CD4-positive, alpha-beta T cell (primary cell): ENCODE measurements at regions of chr17 and their contacts with region 1.

Region 1: GRCh38 chr17:67376737-67377487 is at the start of gene PITPNC1:
- DNase-seq: peak; percentile 77 to 95 (median 84)
- ATAC-seq: peak; percentile 71
- H3K4me3 ChIP-seq: peak within 1 kb of the TSS; percentile 99
- H3K4me3 Mint-ChIP-seq: peak within 1 kb of the TSS; percentile 97
- H3K27ac ChIP-seq: peak within 1 kb of the TSS; percentile 76 to 95
- H3K27ac Mint-ChIP-seq: peak within 1 kb of the TSS; percentile 86
- H3K4me1 ChIP-seq: peaks cover 49% of the 10 kb centered on the region
- H3K4me1 Mint-ChIP-seq: peaks cover 41% of the 10 kb centered on the region
- H3K27me3 ChIP-seq: no peaks in the 10 kb centered on the region
- H3K27me3 Mint-ChIP-seq: no peaks in the 10 kb centered on the region
- CTCF ChIP-seq: no peak
- total RNA-seq, gene PITPNC1: 80.2 to 83.4 TPM

Region 2: GRCh38 chr17:67359960-67360773 is 16.7 kb before region 1 on chr17:
- CTCF ChIA-PET with region 1: interaction called, 21 read pairs
- POLR2A ChIA-PET with region 1: interaction called, 40 read pairs
- intact Hi-C with region 1: loop called in 1 of 2 experiments (anchors 2 kb)
- DNase-seq: peak in 10 of 14 experiments; percentile 34 to 84 (median 58)
- ATAC-seq: peak; percentile 96
- H3K4me3 ChIP-seq: no peak overlapping the region
- H3K4me3 Mint-ChIP-seq: peak overlapping the region; percentile 17
- H3K27ac ChIP-seq: peak overlapping the region in 1 of 2 donors; percentile 37
- H3K27ac Mint-ChIP-seq: peak overlapping the region; percentile 73
- H3K4me1 ChIP-seq: peaks cover 48% of the 10 kb centered on the region
- H3K4me1 Mint-ChIP-seq: peaks cover 55% of the 10 kb centered on the region
- H3K27me3 ChIP-seq: no peaks in the 10 kb centered on the region
- H3K27me3 Mint-ChIP-seq: no peaks in the 10 kb centered on the region
- CTCF ChIP-seq: peak; percentile 56

Region 3: GRCh38 chr17:67400193-67400592 is 23.3 kb after region 1 on chr17:
- CTCF ChIA-PET with region 1: interaction called, 13 read pairs
- POLR2A ChIA-PET with region 1: interaction called, 6 read pairs
- intact Hi-C with region 1: loop called in 1 of 2 experiments (anchors 2 kb)
- DNase-seq: peak in 4 of 14 experiments; percentile 34 to 72 (median 60)
- ATAC-seq: peak; percentile 50
- H3K4me3 ChIP-seq: no peak overlapping the region
- H3K4me3 Mint-ChIP-seq: peak overlapping the region; percentile 65
- H3K27ac ChIP-seq: peak overlapping the region; percentile 31 to 77
- H3K27ac Mint-ChIP-seq: peak overlapping the region; percentile 99
- H3K4me1 ChIP-seq: peaks cover 52% of the 10 kb centered on the region
- H3K4me1 Mint-ChIP-seq: peaks cover 77% of the 10 kb centered on the region
- H3K27me3 ChIP-seq: no peaks in the 10 kb centered on the region
- H3K27me3 Mint-ChIP-seq: no peaks in the 10 kb centered on the region
- CTCF ChIP-seq: no peak

Region 4: DNA sequence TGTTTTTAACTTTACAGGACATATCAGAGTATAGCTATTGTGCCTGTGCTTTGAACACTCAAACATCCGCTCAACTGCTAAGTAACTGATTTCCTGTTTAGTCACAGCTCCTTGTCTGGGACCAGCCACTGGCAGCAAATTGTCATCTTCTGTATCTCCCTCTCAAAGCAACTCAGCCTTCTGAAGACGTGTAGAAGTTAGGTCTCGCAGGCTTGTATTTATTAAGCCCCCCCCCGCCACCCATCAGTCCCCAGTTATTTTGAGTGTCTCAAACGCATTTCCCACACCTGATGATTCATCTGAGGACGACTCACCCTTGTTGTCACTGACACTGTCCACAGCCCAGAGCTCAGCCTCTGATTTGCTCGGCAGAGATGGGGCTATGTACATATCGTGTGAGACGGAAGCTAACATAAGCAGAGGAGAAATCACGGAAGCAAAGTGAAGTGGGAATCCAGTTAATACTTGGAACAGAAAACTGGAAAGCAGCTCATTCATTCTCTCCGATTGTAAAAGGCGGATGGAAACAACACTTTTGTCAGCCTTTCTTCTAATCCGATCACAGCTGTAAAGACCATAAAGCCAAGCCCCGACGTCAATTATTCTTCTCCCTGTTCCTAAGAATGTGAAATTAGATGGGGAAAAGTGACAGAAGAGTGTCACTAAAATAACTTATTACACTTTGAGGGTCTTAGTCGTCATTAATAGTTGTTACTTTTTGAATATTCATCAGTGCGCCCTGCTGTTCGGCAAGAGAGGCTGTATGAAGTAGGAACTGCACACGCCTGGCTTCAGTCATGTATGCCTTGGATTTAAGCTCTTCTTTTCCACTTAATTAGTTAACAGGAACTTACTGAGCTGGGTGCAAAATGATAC is 64.4 kb after region 1 on chr17:
- CTCF ChIA-PET with region 1: interaction called, 43 read pairs
- POLR2A ChIA-PET with region 1: interaction called, 129 read pairs
- intact Hi-C with region 1: loop called (anchors 2 to 5 kb)
- DNase-seq: peak; percentile 65 to 93 (median 79)
- ATAC-seq: peak; percentile 86
- H3K4me3 ChIP-seq: peak overlapping the region; percentile 43
- H3K4me3 Mint-ChIP-seq: peak overlapping the region; percentile 80
- H3K27ac ChIP-seq: peak overlapping the region; percentile 89 to 93
- H3K27ac Mint-ChIP-seq: peak overlapping the region; percentile 91
- H3K4me1 ChIP-seq: peaks cover 94% of the 10 kb centered on the region
- H3K4me1 Mint-ChIP-seq: peaks cover 89% of the 10 kb centered on the region
- H3K27me3 ChIP-seq: no peaks in the 10 kb centered on the region
- H3K27me3 Mint-ChIP-seq: no peaks in the 10 kb centered on the region
- CTCF ChIP-seq: no peak

Region 5: DNA sequence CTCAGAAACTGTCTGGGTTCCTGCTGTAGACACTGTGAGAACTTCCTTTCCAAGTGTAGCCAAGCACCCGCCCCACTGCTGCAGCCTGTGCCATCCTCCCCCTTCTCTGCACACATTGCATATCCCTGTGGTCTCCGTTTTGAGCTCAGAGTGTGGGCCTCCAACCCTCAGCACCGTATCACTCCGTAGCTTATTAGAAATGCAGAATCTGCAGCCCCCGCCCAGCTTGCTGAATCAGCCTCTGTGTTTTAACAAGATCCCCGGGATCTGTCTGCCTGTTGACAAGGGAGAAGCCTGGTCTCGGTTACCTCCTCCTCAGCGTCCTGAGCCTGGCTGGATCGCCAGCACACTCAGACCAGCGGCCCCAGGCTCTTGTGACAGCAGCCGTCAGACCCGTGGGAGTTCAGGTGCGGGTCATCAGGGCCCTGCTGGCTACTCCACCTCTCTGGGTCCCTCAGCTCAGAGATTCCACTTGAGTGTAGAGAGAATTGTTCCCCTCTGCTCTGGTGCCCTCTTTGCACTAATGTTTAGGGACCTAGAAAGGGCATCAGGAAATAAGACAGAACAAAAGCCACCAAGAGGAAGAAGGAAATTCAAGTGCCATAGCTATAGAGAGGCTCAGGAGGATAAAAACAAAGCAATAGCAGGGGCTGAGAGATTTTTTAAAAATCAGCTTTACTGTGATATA is 92.4 kb after region 1 on chr17:
- CTCF ChIA-PET with region 1: interaction called, 187 read pairs
- POLR2A ChIA-PET with region 1: interaction called, 122 read pairs
- intact Hi-C with region 1: no loop called
- DNase-seq: peak in 8 of 14 experiments; percentile 23 to 56 (median 44)
- ATAC-seq: peak; percentile 53
- H3K4me3 ChIP-seq: peak overlapping the region; percentile 16
- H3K4me3 Mint-ChIP-seq: peak overlapping the region; percentile 66
- H3K27ac ChIP-seq: peak overlapping the region; percentile 61 to 67
- H3K27ac Mint-ChIP-seq: peak overlapping the region; percentile 83
- H3K4me1 ChIP-seq: peaks cover 68% of the 10 kb centered on the region
- H3K4me1 Mint-ChIP-seq: peaks cover 71% of the 10 kb centered on the region
- H3K27me3 ChIP-seq: no peaks in the 10 kb centered on the region
- H3K27me3 Mint-ChIP-seq: no peaks in the 10 kb centered on the region
- CTCF ChIP-seq: no peak

Region 6: DNA sequence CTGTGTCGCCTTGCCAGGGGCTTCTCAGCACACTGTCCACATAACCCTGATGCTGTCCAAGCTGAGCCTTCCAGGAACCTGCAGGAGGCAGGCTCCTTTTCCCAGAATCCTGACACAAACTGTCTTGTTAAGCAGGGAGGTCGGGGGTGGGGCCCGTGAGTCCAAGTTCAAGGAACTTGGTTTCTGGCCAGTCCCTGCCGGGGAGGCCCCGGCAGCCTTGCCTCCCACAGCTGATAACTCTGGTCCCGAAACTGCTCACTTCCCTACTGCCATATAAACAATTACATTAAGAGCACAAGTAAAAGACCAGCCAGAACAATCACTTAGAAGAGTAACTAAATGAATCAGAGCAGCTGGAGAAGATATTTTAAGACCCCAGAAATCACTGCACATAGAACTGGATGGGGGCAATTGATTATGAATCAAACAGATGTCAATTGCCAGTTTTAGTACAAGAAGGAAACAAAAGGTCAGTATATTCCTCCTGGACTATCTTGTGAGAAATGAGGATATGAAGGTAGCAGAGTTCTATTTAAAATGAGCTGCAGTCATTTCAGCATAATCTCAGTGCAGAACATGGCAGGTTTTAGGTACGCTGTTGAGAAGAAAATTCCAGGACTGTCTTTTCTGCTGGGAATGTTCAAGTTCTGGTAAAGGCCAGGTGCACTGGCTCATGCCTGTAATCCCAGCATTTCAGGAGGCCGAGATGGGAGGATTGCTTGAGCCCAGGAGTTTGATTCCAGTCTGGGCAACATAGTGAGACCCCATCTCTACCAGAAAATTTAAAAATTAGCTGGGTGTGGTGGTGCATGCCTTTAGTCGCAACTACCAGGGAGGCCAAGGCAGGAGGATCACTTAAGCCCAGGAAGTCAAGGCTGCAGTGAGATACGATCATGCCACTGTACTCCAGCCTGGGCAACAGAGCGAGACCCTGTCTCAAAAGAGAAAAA is 169.9 kb after region 1 on chr17:
- CTCF ChIA-PET with region 1: no interaction called
- POLR2A ChIA-PET with region 1: no interaction called
- intact Hi-C with region 1: no loop called
- DNase-seq: peak in 2 of 14 experiments; percentile 25
- ATAC-seq: no peak
- H3K4me3 ChIP-seq: no peak overlapping the region
- H3K4me3 Mint-ChIP-seq: no peak overlapping the region
- H3K27ac ChIP-seq: no peak overlapping the region
- H3K27ac Mint-ChIP-seq: no peak overlapping the region
- H3K4me1 ChIP-seq: peaks cover 5% of the 10 kb centered on the region
- H3K4me1 Mint-ChIP-seq: peaks cover 35% of the 10 kb centered on the region
- H3K27me3 ChIP-seq: no peaks in the 10 kb centered on the region
- H3K27me3 Mint-ChIP-seq: no peaks in the 10 kb centered on the region
- CTCF ChIP-seq: no peak

Region 7: GRCh38 chr17:67602956-67603355 is 226.0 kb after region 1 on chr17:
- CTCF ChIA-PET with region 1: interaction called, 26 read pairs
- POLR2A ChIA-PET with region 1: interaction called, 6 read pairs
- intact Hi-C with region 1: loop called (anchors 1 kb)
- DNase-seq: peak; percentile 9 to 72 (median 33)
- ATAC-seq: peak; percentile 99
- H3K4me3 ChIP-seq: no peak overlapping the region
- H3K4me3 Mint-ChIP-seq: no peak overlapping the region
- H3K27ac ChIP-seq: no peak overlapping the region
- H3K27ac Mint-ChIP-seq: peak overlapping the region; percentile 32
- H3K4me1 ChIP-seq: no peaks in the 10 kb centered on the region
- H3K4me1 Mint-ChIP-seq: peaks cover 25% of the 10 kb centered on the region
- H3K27me3 ChIP-seq: no peaks in the 10 kb centered on the region
- H3K27me3 Mint-ChIP-seq: no peaks in the 10 kb centered on the region
- CTCF ChIP-seq: peak; percentile 58

Region 8: GRCh38 chr17:67717624-67718329 is 340.9 kb after region 1 on chr17 and contains the start of gene NOL11:
- CTCF ChIA-PET with region 1: no interaction called
- POLR2A ChIA-PET with region 1: interaction called, 20 read pairs
- intact Hi-C with region 1: no loop called
- DNase-seq: peak; percentile 99 to 100 (median 99)
- ATAC-seq: peak; percentile 91
- H3K4me3 ChIP-seq: peak within 1 kb of the TSS; percentile 81
- H3K4me3 Mint-ChIP-seq: peak within 1 kb of the TSS; percentile 97
- H3K27ac ChIP-seq: peak within 1 kb of the TSS; percentile 91 to 95
- H3K27ac Mint-ChIP-seq: peak within 1 kb of the TSS; percentile 95
- H3K4me1 ChIP-seq: peaks cover 20% of the 10 kb centered on the region
- H3K4me1 Mint-ChIP-seq: peaks cover 30% of the 10 kb centered on the region
- H3K27me3 ChIP-seq: no peaks in the 10 kb centered on the region
- H3K27me3 Mint-ChIP-seq: no peaks in the 10 kb centered on the region
- CTCF ChIP-seq: peak; percentile 83
- total RNA-seq, gene NOL11: 89.1 to 91.2 TPM